ENCODE measurements at regions of chr4 and their contacts with region 1.

Region 1: DNA sequence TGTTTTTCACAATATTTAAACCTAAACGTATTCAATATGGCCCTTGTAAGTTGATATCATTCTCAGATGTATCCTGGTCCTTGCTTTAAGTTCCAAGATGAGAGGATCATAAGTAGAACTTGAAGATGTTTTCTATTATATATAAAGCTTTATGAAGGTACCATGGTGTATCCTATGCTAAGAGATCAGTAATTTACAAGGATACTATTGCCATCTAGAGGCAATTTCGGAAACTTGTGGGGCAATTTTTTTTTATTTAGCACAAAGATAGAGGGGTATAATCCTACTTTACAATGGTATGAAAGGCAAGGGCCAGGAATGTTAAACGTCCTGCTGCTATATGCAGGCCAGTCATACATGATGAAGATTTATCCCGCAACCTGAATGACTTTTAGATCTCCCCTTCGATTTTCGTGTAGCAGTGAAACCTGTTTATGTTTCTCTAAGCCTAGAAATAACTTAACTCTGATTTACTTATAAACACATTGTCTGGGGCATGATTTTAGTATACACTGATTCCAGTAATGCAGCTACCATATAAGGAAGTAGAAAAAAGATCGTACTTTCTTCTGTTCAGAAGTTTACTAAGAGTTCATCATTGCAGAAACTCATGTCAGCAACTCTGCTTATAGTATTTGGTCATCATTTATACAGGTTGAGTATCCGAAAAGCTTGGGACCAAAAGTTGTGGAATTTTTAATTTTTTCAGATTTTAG is 2.6 kb downstream of the SLC25A31 start:
- DNase-seq: peak; percentile 59
- H3K4me3 ChIP-seq: no peak overlapping the region
- H3K27ac ChIP-seq: no peak overlapping the region
- H3K4me1 ChIP-seq: no peaks in the 10 kb centered on the region
- H3K27me3 ChIP-seq: peaks cover 2 to 4% of the 10 kb centered on the region in 2 experiments
- CTCF ChIP-seq: peak; percentile 23 to 28
- POLR2A ChIP-seq: no peak

Region 2: GRCh38 chr4:127400731-127401346 is 331.9 kb before region 1 on chr4:
- CTCF ChIA-PET with region 1: no interaction called
- POLR2A ChIA-PET with region 1: no interaction called
- dilution Hi-C with region 1: no loop called
- intact Hi-C with region 1: no loop called
- DNase-seq: peak; percentile 68
- H3K4me3 ChIP-seq: no peak overlapping the region
- H3K27ac ChIP-seq: no peak overlapping the region
- H3K4me1 ChIP-seq: no peaks in the 10 kb centered on the region
- H3K27me3 ChIP-seq: no peaks in the 10 kb centered on the region
- CTCF ChIP-seq: peak; percentile 59 to 69
- POLR2A ChIP-seq: no peak

Region 3: DNA sequence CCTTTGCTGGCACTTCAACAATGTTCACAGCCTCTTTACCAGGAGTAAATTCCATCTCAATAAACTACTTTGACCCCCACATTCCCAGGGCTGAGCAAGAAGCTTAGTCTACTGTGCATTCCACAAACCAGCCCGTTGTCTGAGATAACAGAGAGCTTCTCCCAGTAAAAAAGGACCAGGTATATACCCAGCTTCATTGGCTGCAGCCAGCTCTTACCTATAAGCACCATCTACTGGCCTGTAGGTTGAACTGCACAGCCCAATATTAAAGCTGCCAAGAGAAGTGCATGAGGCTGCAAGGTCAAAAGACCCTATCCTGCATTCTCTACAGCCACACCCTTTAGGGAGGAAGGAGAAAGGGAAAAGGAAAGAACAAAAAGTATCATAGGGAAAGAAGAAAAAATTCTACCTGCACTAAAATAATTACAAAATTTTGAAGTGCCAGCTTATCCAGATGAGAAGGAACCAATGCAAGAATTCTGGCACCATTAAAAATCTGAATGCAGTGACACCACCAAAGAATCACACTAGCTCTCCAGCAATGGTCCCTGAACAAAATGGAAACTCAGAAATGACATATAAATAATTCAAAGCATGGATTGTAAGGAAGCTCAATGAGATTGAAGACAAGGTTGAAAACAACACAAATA is 145.7 kb before region 1 on chr4:
- CTCF ChIA-PET with region 1: interaction called, 18 read pairs
- POLR2A ChIA-PET with region 1: no interaction called
- dilution Hi-C with region 1: no loop called
- intact Hi-C with region 1: no loop called
- DNase-seq: peak; percentile 16
- H3K4me3 ChIP-seq: no peak overlapping the region
- H3K27ac ChIP-seq: no peak overlapping the region
- H3K4me1 ChIP-seq: no peaks in the 10 kb centered on the region
- H3K27me3 ChIP-seq: no peaks in the 10 kb centered on the region
- CTCF ChIP-seq: peak; percentile 36 to 65
- POLR2A ChIP-seq: no peak

Region 4: DNA sequence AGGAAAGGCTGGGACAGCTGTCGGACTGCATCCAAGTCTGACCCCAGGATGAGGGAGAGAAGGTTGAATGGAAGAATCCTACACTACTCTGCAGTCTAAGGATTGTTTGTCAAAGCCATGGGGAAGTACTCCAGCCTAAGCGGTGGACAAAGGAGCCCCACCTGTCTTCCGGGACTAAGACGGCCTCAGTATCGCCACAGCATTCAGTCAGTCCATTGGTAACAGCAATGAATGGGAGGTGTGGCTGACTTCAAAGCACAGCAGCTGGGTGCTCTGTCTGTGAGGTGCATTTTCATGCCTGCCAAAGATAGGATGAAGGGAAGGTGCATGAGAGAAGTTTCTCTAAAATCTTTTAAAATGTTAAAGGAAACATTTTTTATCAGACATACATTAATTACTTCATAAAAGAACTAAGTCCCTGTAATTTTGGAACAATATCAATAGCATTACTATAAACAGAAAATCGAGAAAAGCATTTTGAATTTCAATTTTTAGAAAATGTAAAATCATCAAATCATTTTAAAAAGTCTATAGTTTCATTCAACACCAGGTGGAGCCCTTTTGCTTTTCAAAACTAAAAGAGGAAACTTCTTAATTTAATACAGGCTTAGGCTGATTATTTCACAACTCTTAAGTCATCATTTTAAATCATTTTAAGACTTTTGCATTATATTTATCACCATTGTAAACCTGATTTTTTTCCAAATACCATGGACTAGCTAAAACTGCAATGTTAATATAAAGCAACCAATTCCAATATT is 127.6 kb before region 1 on chr4:
- CTCF ChIA-PET with region 1: interaction called, 414 read pairs
- POLR2A ChIA-PET with region 1: interaction called, 3 read pairs
- dilution Hi-C with region 1: no loop called
- intact Hi-C with region 1: loop called (anchors 1 kb)
- DNase-seq: peak; percentile 26
- H3K4me3 ChIP-seq: no peak overlapping the region
- H3K27ac ChIP-seq: no peak overlapping the region
- H3K4me1 ChIP-seq: no peaks in the 10 kb centered on the region
- H3K27me3 ChIP-seq: peaks cover 10 to 26% of the 10 kb centered on the region in 2 experiments
- CTCF ChIP-seq: peak; percentile 10 to 15
- POLR2A ChIP-seq: no peak

Region 5: DNA sequence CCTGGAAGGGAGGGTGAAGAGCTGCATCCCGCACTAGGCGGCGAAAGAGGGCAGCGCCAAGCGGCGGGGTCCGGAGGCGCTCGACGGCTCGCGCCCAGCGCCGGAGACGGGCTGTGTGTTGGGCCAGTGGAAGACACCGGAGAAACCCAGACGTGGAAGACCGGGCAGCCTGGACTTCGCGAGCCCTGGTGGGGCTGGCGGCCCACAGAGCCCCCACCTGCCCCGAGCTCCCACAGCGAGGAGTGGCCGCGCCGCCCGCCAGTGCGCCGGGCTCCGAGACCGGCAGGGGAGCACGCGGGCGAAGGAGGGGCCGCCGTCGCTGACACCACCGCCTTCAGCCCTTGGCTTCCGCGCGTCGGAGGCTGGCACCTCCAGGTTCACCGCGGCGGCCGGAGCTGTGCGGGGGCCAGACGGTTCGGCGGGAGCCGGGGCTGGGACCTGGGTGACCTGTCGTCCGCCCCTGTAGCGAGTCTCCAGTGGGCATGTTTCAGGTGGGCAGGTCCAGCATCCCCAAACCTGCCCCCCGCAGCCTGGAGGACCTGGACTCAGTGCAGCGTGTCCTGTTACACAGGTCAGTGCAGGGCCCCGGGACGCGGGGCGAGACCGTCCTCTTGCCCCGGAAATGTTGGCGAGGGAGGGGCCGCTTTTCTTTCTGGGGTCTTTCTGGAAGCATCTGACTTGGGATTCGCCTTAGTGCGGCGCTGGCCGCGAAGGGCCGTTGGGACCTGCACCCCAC is 109.7 kb before region 1 on chr4:
- CTCF ChIA-PET with region 1: interaction called, 35 read pairs
- POLR2A ChIA-PET with region 1: no interaction called
- dilution Hi-C with region 1: no loop called
- intact Hi-C with region 1: loop called (anchors 1 kb)
- DNase-seq: peak; percentile 57
- H3K4me3 ChIP-seq: peak overlapping the region; percentile 48 to 89 (median 78)
- H3K27ac ChIP-seq: no peak overlapping the region
- H3K4me1 ChIP-seq: peaks cover 15% of the 10 kb centered on the region
- H3K27me3 ChIP-seq: peaks cover 0 to 19% of the 10 kb centered on the region in 2 experiments
- CTCF ChIP-seq: peak; percentile 24 to 51
- POLR2A ChIP-seq: no peak

Region 6: DNA sequence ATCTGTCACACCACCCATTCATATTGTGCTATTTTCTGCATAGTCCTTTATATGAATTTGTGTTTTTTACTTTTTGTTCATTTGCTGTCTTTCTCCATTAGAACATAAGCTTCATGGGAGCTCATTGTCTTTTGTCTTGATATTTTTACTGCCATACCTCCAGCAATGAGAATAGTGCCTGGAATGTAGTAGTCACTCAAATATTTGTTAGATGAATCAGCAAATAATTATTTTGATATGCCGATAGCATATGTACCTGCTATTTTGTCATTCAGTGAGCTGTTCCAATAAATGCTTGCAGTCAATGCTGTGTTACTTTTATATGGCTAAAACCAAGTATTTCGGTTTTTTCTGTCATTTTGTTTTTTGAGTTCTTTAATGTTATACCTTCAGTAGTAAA is 46.1 kb before region 1 on chr4:
- CTCF ChIA-PET with region 1: interaction called, 18 read pairs
- POLR2A ChIA-PET with region 1: no interaction called
- dilution Hi-C with region 1: no loop called
- intact Hi-C with region 1: no loop called
- DNase-seq: peak; percentile 42
- H3K4me3 ChIP-seq: no peak overlapping the region
- H3K27ac ChIP-seq: peak overlapping the region; percentile 57
- H3K4me1 ChIP-seq: peaks cover 18% of the 10 kb centered on the region
- H3K27me3 ChIP-seq: no peaks in the 10 kb centered on the region
- CTCF ChIP-seq: no peak
- POLR2A ChIP-seq: no peak

Region 7: GRCh38 chr4:127747883-127748282 is 15.1 kb after region 1 on chr4:
- CTCF ChIA-PET with region 1: interaction called, 11 read pairs
- POLR2A ChIA-PET with region 1: no interaction called
- dilution Hi-C with region 1: no loop called
- intact Hi-C with region 1: no loop called
- DNase-seq: no peak
- H3K4me3 ChIP-seq: no peak overlapping the region
- H3K27ac ChIP-seq: no peak overlapping the region
- H3K4me1 ChIP-seq: no peaks in the 10 kb centered on the region
- H3K27me3 ChIP-seq: peaks cover 2 to 5% of the 10 kb centered on the region in 2 experiments
- CTCF ChIP-seq: no peak
- POLR2A ChIP-seq: no peak

Measured in endothelial cell of umbilical vein (primary cell).